ENCODE measurements at regions of chr2 and their contacts with region 1.

Region 1: GRCh38 chr2:127479219-127479825 is 47.0 kb downstream of the IWS1 start:
- DNase-seq: no peak
- H3K4me3 ChIP-seq: no peak overlapping the region
- H3K27ac ChIP-seq: no peak overlapping the region
- H3K4me1 ChIP-seq: no peaks in the 10 kb centered on the region
- H3K27me3 ChIP-seq: no peaks in the 10 kb centered on the region
- CTCF ChIP-seq: peak; percentile 23 to 69 (median 61)
- POLR2A ChIP-seq: no peak

Region 2: GRCh38 chr2:127197475-127198385 is 281.6 kb before region 1 on chr2:
- intact Hi-C with region 1: loop called (anchors 5 kb)
- DNase-seq: peak; percentile 90
- H3K4me3 ChIP-seq: peak overlapping the region in 1 of 8 donors; percentile 27
- H3K27ac ChIP-seq: no peak overlapping the region
- H3K4me1 ChIP-seq: peaks cover 0 to 7% (median 0%) of the 10 kb centered on the region in 6 donors
- H3K27me3 ChIP-seq: no peaks in the 10 kb centered on the region
- CTCF ChIP-seq: peak in 9 of 11 experiments; percentile 18 to 62 (median 41)
- POLR2A ChIP-seq: no peak

Region 3: DNA sequence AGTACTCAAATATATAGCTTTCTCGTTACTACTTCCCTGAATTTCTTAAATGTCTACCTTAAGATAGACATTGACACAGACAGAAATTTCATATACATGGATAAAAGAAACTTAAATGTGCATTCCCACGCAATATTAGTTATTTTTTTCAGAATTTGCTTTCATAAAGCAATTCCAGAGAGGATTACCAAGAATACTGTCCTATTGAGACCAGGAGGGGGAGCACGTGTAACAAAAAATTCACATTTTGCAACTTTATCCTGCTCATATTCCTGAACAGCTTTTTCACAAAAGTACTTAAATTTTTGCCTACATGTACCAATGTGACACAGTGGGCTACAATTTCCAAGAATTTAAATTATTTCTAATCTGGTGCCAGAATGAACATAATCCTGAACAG is 154.7 kb before region 1 on chr2:
- intact Hi-C with region 1: loop called (anchors 10 kb)
- DNase-seq: no peak
- H3K4me3 ChIP-seq: no peak overlapping the region
- H3K27ac ChIP-seq: no peak overlapping the region
- H3K4me1 ChIP-seq: no peaks in the 10 kb centered on the region
- H3K27me3 ChIP-seq: no peaks in the 10 kb centered on the region
- CTCF ChIP-seq: peak in 8 of 11 experiments; percentile 32 to 62 (median 46)
- POLR2A ChIP-seq: no peak

Region 4: DNA sequence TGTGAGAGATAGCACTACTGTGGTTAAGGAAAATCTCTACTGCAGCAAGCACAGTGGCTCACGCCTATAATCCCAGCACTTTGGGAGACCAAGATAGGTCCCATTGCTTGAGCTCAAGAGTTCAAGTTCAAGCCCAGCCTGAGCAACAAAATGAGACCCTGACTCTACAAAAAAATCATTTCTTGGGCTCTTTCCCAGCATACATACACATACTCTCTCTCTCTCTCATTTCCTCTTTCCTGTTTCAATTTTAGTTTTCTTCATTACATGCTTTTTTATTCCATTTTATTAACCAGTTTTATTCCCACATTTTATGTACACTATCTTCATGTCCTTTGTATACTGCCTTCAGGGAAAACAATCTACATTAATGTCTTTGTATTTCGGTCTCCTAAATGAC is 317.1 kb after region 1 on chr2:
- intact Hi-C with region 1: no loop called
- DNase-seq: no peak
- H3K4me3 ChIP-seq: no peak overlapping the region
- H3K27ac ChIP-seq: peak overlapping the region in 4 of 8 donors; percentile 10 to 46 (median 43)
- H3K4me1 ChIP-seq: peaks cover 34 to 100% (median 79%) of the 10 kb centered on the region in 6 donors
- H3K27me3 ChIP-seq: no peaks in the 10 kb centered on the region
- CTCF ChIP-seq: no peak
- POLR2A ChIP-seq: no peak

Measured in spleen (tissue), 13 donors.